GM10248 (cell line): ENCODE measurements at regions of chr21 and their contacts with region 1.

Region 1: GRCh38 chr21:34745557-34746255 is 76.9 kb downstream of the CLIC6 start:
- DNase-seq: peak; percentile 79
- CTCF ChIP-seq: peak; percentile 82

Region 2: GRCh38 chr21:34545079-34545884 is 200.4 kb before region 1 on chr21:
- CTCF ChIA-PET with region 1: no interaction called
- POLR2A ChIA-PET with region 1: no interaction called
- DNase-seq: peak; percentile 80
- CTCF ChIP-seq: no peak

Region 3: DNA sequence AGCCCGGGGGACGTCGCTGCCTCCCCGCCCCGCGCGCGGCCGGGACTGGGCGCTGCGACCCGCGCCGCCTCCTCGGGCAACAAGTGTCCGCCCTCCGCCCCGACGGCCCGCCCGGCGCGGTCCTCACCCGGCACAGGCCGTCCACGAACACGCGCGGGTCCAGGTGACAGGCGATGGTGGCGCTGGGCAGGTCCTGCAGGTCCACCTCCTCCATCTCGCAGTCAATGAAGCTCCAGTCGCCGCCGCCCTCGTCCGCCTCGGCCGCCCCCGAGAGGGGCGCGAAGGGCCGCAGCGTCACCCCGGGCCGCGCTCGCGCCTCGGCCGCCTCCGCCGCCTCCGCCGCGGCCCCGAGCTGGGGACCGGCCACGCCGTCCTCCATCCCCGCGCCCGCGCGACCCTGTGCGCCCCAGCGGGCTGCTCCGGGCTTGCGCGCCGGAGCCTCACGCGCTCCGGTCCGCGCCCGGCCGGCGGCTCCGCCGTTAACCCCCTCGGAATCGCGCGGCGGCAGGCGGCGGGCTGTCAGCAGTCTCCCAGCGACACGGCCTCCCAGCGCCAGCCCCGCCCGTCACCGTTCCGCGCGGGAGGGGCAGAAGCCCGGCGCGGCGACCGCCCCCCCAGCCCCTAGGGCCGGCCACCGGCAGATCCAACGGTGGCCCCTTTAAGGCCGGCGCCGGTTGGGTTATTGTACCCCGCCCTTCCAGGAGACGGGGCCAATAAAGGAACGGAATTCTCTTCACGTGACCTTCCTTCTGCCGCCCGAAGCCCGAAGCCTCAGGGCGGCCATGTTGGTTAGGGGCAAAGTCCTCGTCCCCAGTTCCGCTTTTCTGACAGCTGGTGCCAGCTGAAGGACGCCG is 130.8 kb before region 1 on chr21 and contains the start of gene RCAN1:
- CTCF ChIA-PET with region 1: no interaction called
- POLR2A ChIA-PET with region 1: no interaction called
- DNase-seq: peak; percentile 94
- CTCF ChIP-seq: no peak

Region 4: GRCh38 chr21:34642211-34643075 is 103.3 kb before region 1 on chr21:
- CTCF ChIA-PET with region 1: no interaction called
- POLR2A ChIA-PET with region 1: no interaction called
- DNase-seq: peak; percentile 45
- CTCF ChIP-seq: no peak

Region 5: DNA sequence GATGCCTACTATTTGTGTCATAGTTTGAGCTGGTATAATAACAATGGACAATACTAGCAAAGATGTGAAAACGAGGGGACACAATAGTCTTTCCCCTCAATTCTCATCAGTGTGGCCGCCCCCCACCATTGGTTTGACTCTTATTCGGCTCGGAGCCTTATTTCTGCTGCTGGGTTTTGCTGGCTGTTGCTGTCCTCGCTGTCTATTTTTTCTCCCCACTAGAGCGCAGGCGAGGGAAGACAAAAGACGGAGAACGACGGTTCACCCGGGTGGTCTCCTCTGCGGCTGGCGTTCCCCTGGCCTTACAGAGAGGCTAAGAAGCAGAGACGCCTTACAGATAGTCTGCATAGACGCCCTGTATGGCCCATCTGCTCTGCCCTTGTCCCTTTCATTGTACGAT is 57.6 kb before region 1 on chr21:
- CTCF ChIA-PET with region 1: interaction called, 11 read pairs
- POLR2A ChIA-PET with region 1: no interaction called
- DNase-seq: no peak
- CTCF ChIP-seq: peak; percentile 39

Region 6: GRCh38 chr21:34722684-34723300 is 22.9 kb before region 1 on chr21:
- CTCF ChIA-PET with region 1: interaction called, 26 read pairs
- POLR2A ChIA-PET with region 1: no interaction called
- DNase-seq: peak; percentile 58
- CTCF ChIP-seq: peak; percentile 58

Region 7: DNA sequence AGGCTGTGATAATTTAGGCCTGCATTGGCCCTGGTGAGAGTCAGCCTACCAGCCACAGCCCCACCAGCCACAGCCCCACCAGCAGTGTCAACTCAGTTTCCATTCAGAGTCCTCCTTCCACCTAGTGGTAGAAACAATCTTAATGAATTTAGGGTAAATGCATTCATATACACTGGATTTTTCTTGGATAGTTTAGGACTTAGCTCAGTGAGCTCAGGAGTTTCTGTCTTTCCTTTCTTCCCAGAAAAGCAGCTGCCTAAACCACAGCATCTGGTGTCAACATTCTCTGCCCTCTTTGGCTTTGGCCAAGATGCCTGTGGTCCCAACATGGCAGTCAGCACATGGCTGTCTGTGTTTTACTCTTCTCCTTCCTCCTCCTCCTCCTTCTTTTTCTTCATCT is 17.1 kb after region 1 on chr21:
- CTCF ChIA-PET with region 1: interaction called, 35 read pairs
- POLR2A ChIA-PET with region 1: no interaction called
- DNase-seq: no peak
- CTCF ChIP-seq: no peak

Region 8: DNA sequence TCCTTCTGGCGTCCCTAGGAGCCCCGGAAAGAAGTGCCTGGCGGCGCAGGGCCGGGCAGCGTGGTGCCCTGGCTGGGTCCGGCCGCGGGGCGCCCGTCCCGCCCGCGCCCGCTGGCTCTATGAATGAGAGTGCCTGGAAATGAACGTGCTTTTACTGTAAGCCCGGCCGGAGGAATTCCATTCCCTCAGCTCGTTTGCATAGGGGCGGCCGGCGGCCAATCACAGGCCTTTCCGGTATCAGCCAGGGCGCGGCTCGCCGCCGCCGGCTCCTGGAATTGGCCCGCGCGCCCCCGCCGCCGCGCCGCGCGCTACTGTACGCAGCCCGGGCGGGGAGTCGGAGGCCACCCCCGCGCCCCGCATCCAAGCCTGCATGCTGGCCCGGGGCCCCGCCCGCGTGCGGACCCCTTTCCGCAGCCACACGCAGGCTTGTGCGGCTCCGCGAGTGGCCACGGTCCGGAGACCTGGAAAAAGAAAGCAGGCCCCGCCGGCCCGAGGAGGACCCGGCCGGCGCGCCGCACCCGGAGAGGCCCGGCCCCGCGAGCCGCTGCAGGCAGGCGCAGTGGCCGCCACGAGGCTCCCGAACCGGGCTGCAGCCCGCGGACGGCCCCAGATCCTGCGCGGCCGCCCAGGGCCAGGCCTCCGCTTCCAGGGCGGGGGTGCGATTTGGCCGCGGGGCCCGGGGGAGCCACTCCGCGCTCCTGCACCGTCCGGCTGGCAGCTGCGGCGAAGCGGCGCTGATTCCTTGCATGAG is 143.0 kb after region 1 on chr21:
- CTCF ChIA-PET with region 1: interaction called, 22 read pairs
- POLR2A ChIA-PET with region 1: no interaction called
- DNase-seq: peak; percentile 84
- CTCF ChIP-seq: no peak

Region 9: DNA sequence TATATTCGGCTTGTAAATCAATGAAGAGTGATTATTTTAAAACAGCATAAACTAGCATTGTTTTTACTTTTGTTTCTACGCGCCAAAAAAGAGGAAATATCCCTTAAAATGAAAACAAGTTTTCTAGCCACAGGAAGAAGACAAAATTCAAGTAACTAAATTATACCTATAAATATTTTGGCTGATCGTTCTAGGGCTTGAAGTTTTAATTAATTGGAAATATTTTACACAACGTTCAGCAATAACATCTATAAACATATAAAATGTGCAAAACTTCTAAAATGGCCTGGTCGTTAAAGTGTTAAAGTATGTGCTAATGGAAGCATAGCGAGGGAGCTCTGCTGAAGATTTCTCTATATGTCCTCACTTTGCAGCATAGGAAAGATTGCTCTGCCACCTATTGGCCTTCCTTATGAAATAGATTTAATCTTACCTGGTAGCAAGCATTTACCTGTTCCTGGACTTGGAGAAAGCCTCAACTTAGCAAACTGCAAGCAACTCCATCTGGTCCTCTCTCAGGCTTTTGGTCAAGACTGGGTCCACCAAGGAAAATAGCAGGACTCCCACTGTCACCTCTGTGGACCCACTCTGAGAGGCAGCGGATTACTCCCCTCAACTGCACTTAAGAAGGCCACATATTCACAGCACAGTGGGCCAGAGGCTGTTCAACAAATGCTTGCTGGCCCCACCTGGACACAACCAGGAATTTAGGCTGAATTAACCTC is 654.7 kb after region 1 on chr21:
- CTCF ChIA-PET with region 1: interaction called, 16 read pairs
- POLR2A ChIA-PET with region 1: no interaction called
- DNase-seq: peak; percentile 65
- CTCF ChIP-seq: peak; percentile 60

Region 10: GRCh38 chr21:35840197-35840799 is 1094.6 kb after region 1 on chr21:
- CTCF ChIA-PET with region 1: interaction called, 21 read pairs
- POLR2A ChIA-PET with region 1: no interaction called
- DNase-seq: peak; percentile 37
- CTCF ChIP-seq: peak; percentile 71